CD4-positive, alpha-beta T cell (primary cell): ENCODE measurements at regions of chr6 and their contacts with region 1.

Region 1: GRCh38 chr6:32522302-32523047 is 7.6 kb downstream of the HLA-DRB5 start:
- DNase-seq: no peak
- ATAC-seq: no peak
- H3K4me3 ChIP-seq: no peak overlapping the region
- H3K4me3 Mint-ChIP-seq: no peak overlapping the region
- H3K27ac ChIP-seq: no peak overlapping the region
- H3K27ac Mint-ChIP-seq: no peak overlapping the region
- H3K4me1 ChIP-seq: no peaks in the 10 kb centered on the region
- H3K4me1 Mint-ChIP-seq: no peaks in the 10 kb centered on the region
- H3K27me3 ChIP-seq: no peaks in the 10 kb centered on the region
- H3K27me3 Mint-ChIP-seq: peaks cover 3% of the 10 kb centered on the region
- CTCF ChIP-seq: no peak

Region 2: DNA sequence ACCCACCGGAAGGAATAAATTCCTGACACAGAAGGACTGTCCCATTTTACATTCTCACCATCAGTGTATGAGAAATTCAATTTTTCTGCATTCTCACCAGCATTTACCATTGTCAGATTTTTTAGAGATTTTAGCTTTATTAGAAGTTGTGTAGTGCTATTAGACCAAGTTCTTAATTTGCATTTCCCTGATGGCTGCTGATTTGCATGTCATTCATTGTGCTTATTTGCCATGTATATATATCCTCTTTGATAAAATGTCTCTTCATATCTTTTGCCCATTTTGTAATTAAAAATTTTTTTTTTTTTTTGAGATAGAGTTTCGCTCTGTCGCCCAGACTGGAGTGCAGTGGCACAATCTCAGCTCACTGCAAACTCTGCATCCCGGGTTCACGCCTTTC is 17.4 kb after region 1 on chr6:
- CTCF ChIA-PET with region 1: no interaction called
- POLR2A ChIA-PET with region 1: no interaction called
- intact Hi-C with region 1: no loop called
- DNase-seq: no peak
- ATAC-seq: no peak
- H3K4me3 ChIP-seq: no peak overlapping the region
- H3K4me3 Mint-ChIP-seq: no peak overlapping the region
- H3K27ac ChIP-seq: no peak overlapping the region
- H3K27ac Mint-ChIP-seq: no peak overlapping the region
- H3K4me1 ChIP-seq: no peaks in the 10 kb centered on the region
- H3K4me1 Mint-ChIP-seq: no peaks in the 10 kb centered on the region
- H3K27me3 ChIP-seq: no peaks in the 10 kb centered on the region
- H3K27me3 Mint-ChIP-seq: peaks cover 5% of the 10 kb centered on the region
- CTCF ChIP-seq: no peak

Region 3: DNA sequence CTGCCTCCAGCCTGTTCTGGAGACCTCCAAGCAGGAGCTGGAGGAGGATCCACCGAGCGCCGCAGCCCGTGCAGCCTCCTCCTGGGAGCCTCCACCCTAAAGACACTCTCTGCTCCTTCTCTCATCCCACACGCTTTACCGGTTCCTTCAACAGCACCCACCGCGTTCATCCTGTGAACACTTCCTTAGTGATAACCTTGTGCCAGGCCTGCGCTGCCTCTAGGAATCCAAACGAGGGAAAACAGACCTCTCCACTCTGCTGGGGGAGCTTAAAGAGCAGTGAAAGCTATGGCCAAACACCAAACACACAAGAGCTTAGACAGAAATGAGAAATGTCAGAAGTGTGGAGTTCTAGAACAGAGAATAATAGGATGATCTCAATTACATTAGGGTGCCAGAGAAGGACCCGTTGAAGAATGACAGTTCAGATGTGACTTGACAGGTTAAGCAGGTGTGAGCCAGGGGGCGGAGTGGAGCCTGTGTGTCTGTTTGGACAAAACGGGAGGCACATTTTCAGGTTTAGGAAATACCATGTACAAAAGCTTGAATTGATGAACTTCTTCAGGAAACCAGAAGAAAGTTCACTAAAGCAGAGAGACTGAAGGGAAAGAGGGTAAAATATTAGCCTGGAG is 36.1 kb after region 1 on chr6:
- CTCF ChIA-PET with region 1: no interaction called
- POLR2A ChIA-PET with region 1: no interaction called
- intact Hi-C with region 1: loop called in 1 of 2 experiments (anchors 1 kb)
- DNase-seq: no peak
- ATAC-seq: no peak
- H3K4me3 ChIP-seq: no peak overlapping the region
- H3K4me3 Mint-ChIP-seq: no peak overlapping the region
- H3K27ac ChIP-seq: no peak overlapping the region
- H3K27ac Mint-ChIP-seq: no peak overlapping the region
- H3K4me1 ChIP-seq: no peaks in the 10 kb centered on the region
- H3K4me1 Mint-ChIP-seq: no peaks in the 10 kb centered on the region
- H3K27me3 ChIP-seq: no peaks in the 10 kb centered on the region
- H3K27me3 Mint-ChIP-seq: peaks cover 14% of the 10 kb centered on the region
- CTCF ChIP-seq: no peak

Region 4: GRCh38 chr6:32589598-32590449 is 67.3 kb after region 1 on chr6 and contains the start of gene HLA-DRB1:
- CTCF ChIA-PET with region 1: no interaction called
- POLR2A ChIA-PET with region 1: no interaction called
- intact Hi-C with region 1: loop called in 1 of 2 experiments (anchors 2 kb)
- DNase-seq: peak in 5 of 14 experiments; percentile 4 to 70 (median 55)
- ATAC-seq: peak; percentile 91
- H3K4me3 ChIP-seq: peak within 1 kb of the TSS; percentile 25
- H3K4me3 Mint-ChIP-seq: peak within 1 kb of the TSS; percentile 80
- H3K27ac ChIP-seq: no peak within 1 kb of the TSS
- H3K27ac Mint-ChIP-seq: no peak within 1 kb of the TSS
- H3K4me1 ChIP-seq: no peaks in the 10 kb centered on the region
- H3K4me1 Mint-ChIP-seq: peaks cover 4% of the 10 kb centered on the region
- H3K27me3 ChIP-seq: no peaks in the 10 kb centered on the region
- H3K27me3 Mint-ChIP-seq: peaks cover 3% of the 10 kb centered on the region
- CTCF ChIP-seq: no peak
- total RNA-seq, gene HLA-DRB1: 31.3 to 33.6 TPM